Activated B cell treated with CpG ODN at 0.5 μM for 24 hours (primary cell): ENCODE measurements at regions of chr10 and their contacts with region 1.

Region 1: GRCh38 chr10:27360581-27361172 is 120.1 kb upstream of the ACBD5 start:
- DNase-seq: peak; percentile 75
- ATAC-seq: peak; percentile 97
- H3K4me3 Mint-ChIP-seq: no peak overlapping the region
- H3K27ac Mint-ChIP-seq: no peak overlapping the region
- H3K4me1 Mint-ChIP-seq: peaks cover 8% of the 10 kb centered on the region
- H3K27me3 Mint-ChIP-seq: no peaks in the 10 kb centered on the region
- CTCF ChIP-seq: peak; percentile 99

Region 2: GRCh38 chr10:27155066-27155754 is 205.5 kb before region 1 on chr10 and contains the start of gene MASTL:
- CTCF ChIA-PET with region 1: no interaction called
- POLR2A ChIA-PET with region 1: interaction called, 3 read pairs
- intact Hi-C with region 1: loop called (anchors 10 kb)
- DNase-seq: peak; percentile 97
- ATAC-seq: peak; percentile 84
- H3K4me3 Mint-ChIP-seq: peak within 1 kb of the TSS; percentile 100
- H3K27ac Mint-ChIP-seq: peak within 1 kb of the TSS; percentile 100
- H3K4me1 Mint-ChIP-seq: peaks cover 44% of the 10 kb centered on the region
- H3K27me3 Mint-ChIP-seq: no peaks in the 10 kb centered on the region
- CTCF ChIP-seq: no peak
- total RNA-seq, gene MASTL: 11.2 and 12.4 TPM in 2 replicates

Region 3: GRCh38 chr10:27223964-27224363 is 136.7 kb before region 1 on chr10:
- CTCF ChIA-PET with region 1: interaction called, 31 read pairs
- POLR2A ChIA-PET with region 1: interaction called, 4 read pairs
- intact Hi-C with region 1: loop called (anchors 1 kb)
- DNase-seq: no peak
- ATAC-seq: peak; percentile 60
- H3K4me3 Mint-ChIP-seq: no peak overlapping the region
- H3K27ac Mint-ChIP-seq: peak overlapping the region; percentile 20
- H3K4me1 Mint-ChIP-seq: no peaks in the 10 kb centered on the region
- H3K27me3 Mint-ChIP-seq: no peaks in the 10 kb centered on the region
- CTCF ChIP-seq: peak; percentile 84

Region 4: GRCh38 chr10:27319752-27320561 is 40.7 kb before region 1 on chr10:
- CTCF ChIA-PET with region 1: interaction called, 4 read pairs
- POLR2A ChIA-PET with region 1: no interaction called
- intact Hi-C with region 1: loop called (anchors 5 kb)
- DNase-seq: peak; percentile 16
- ATAC-seq: peak; percentile 76
- H3K4me3 Mint-ChIP-seq: peak overlapping the region; percentile 66
- H3K27ac Mint-ChIP-seq: no peak overlapping the region
- H3K4me1 Mint-ChIP-seq: peaks cover 10% of the 10 kb centered on the region
- H3K27me3 Mint-ChIP-seq: no peaks in the 10 kb centered on the region
- CTCF ChIP-seq: no peak

Region 5: GRCh38 chr10:27504007-27504807 is 143.5 kb after region 1 on chr10 and contains the start of gene RAB18:
- CTCF ChIA-PET with region 1: no interaction called
- POLR2A ChIA-PET with region 1: no interaction called
- intact Hi-C with region 1: loop called (anchors 1 kb)
- DNase-seq: peak; percentile 93
- ATAC-seq: peak; percentile 96
- H3K4me3 Mint-ChIP-seq: peak within 1 kb of the TSS; percentile 100
- H3K27ac Mint-ChIP-seq: peak within 1 kb of the TSS; percentile 99
- H3K4me1 Mint-ChIP-seq: peaks cover 41% of the 10 kb centered on the region
- H3K27me3 Mint-ChIP-seq: no peaks in the 10 kb centered on the region
- CTCF ChIP-seq: no peak
- total RNA-seq, gene RAB18: 48.3 and 55.6 TPM in 2 replicates

Region 6: DNA sequence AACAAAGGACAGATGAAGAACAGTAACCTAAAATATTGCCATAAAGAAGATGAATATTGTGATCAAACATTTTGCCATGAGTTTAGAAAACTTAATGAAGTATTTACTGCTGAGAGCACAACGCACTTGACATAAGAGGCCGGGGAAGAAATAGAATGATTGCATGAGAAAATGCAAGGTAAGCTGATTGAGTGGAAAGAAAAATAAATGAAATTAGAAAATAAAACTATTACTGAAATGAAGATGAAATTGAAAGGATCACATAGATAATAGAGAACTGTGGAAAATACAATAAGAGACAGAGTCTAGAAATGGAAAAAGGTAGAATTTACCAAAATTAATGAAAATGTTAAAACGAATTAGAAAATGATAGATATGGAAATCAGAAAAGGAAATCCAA is 153.6 kb after region 1 on chr10:
- CTCF ChIA-PET with region 1: no interaction called
- POLR2A ChIA-PET with region 1: no interaction called
- intact Hi-C with region 1: no loop called
- DNase-seq: no peak
- ATAC-seq: no peak
- H3K4me3 Mint-ChIP-seq: no peak overlapping the region
- H3K27ac Mint-ChIP-seq: no peak overlapping the region
- H3K4me1 Mint-ChIP-seq: peaks cover 16% of the 10 kb centered on the region
- H3K27me3 Mint-ChIP-seq: no peaks in the 10 kb centered on the region
- CTCF ChIP-seq: no peak